Heart right ventricle (tissue), 16 donors: ENCODE measurements at regions of chr12 and their contacts with region 1.

Region 1: DNA sequence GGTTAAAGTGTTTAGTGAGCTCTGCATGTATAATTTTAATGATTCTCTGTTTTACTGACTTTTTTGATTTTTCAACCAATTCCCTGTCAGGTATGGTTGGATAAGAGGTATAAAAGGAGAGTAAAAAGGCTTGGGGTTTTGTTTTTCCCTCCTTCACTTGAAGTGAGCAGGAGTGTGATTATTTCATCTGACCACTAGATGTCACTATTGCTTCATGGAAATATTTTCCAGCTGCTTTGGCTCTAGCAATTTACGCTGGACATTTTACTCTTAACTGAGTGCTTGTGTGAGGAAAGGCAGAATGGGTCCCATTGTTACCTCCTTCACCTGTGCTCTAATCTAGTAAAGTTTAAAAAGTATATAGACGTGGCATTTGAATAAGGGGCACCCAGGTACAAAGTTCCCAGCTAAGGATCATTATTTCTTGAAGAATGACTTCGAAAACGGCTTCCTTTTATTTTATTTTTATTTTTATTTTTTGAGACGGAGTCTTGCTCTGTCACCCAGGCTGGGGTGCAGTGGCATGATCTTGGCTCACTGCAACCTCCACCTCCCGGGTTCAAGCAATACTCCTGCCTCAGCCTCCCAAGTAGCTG is 66.5 kb downstream of the TBC1D30 start:
- DNase-seq: no peak
- ATAC-seq: peak in 7 of 8 donors; percentile 41 to 69 (median 63)
- H3K4me3 ChIP-seq: no peak overlapping the region
- H3K27ac ChIP-seq: no peak overlapping the region
- H3K4me1 ChIP-seq: no peaks in the 10 kb centered on the region
- H3K27me3 ChIP-seq: peaks cover 0 to 21% (median 13%) of the 10 kb centered on the region in 7 donors
- CTCF ChIP-seq: peak; percentile 65 to 89 (median 83)

Region 2: DNA sequence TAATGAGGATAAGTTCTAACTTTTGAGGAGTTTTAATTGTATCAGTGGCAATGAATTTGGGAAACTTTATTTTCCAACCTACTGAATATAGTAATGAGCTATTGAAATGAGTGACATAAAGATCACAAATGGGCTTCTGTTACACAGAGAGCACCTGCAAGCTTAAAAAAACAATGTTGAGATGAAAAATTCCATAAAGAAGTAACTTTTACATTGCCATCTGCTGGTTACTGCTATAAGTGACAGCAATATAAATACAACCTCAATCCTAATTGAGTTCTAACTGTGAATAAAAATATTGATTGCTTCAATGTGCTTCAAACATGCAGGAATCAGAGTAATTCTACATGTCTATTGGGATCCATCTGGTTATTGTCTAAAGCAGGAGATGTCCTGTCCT is 216.0 kb after region 1 on chr12:
- intact Hi-C with region 1: loop called in 4 of 10 experiments (anchors 5 to 10 kb)
- DNase-seq: no peak
- ATAC-seq: no peak
- H3K4me3 ChIP-seq: no peak overlapping the region
- H3K27ac ChIP-seq: no peak overlapping the region
- H3K4me1 ChIP-seq: no peaks in the 10 kb centered on the region
- H3K27me3 ChIP-seq: peaks cover 0 to 13% (median 7%) of the 10 kb centered on the region in 7 donors
- CTCF ChIP-seq: peak in 5 of 9 donors; percentile 21 to 49 (median 33)

Region 3: DNA sequence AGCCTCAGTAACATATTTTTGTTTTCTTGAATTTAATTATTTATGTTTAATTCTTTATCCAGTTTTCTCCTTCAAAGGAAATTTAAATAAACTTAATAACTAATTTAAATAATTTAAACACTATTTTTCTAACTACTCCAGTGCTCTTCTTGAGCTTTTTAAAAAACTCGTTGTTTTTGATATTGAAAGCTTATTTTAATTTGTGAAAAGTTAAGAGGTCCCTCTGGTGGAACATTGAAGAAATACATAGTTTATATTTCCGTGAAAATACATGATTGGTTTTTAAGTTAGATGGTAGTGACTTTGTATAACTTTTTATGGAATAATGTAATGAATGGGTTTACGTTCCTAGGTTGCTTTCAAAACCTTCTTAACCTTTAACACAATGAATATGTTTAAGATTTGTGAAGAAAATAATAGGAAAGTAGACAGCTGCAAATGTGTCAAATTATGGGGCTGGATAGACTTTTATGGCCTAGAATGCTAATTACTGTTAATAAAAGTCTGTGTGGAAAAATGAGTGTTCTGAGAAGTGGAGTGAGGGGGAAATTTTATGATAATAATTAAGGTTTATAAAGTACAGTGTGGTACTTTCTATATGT is 341.6 kb after region 1 on chr12:
- intact Hi-C with region 1: loop called in 8 of 10 experiments (anchors 2 to 5 kb)
- DNase-seq: no peak
- ATAC-seq: no peak
- H3K4me3 ChIP-seq: no peak overlapping the region
- H3K27ac ChIP-seq: no peak overlapping the region
- H3K4me1 ChIP-seq: peaks cover 0 to 6% (median 0%) of the 10 kb centered on the region in 9 donors
- H3K27me3 ChIP-seq: no peaks in the 10 kb centered on the region
- CTCF ChIP-seq: peak; percentile 40 to 73 (median 57)

Region 4: DNA sequence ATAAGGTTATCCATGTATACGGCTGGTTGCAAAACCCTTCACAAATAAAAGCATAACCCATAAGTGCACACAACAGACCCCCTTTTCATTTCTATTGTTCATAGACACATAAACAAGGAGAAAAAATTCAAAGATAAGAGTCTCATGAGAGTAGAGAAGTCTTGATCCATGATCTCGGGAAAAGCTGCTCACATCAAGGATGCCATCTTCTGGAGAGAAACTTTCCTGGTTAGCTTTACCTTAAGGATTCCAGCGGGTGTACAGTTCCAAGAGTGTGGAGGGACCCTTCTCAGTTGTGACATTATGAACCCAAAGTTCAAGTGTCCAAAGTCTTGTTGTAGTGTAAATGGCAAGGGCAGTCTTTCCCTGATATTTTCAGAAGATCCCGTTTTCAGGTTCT is 1095.1 kb after region 1 on chr12:
- intact Hi-C with region 1: loop called in 2 of 10 experiments (anchors 5 to 10 kb)
- DNase-seq: no peak
- ATAC-seq: no peak
- H3K4me3 ChIP-seq: no peak overlapping the region
- H3K27ac ChIP-seq: no peak overlapping the region
- H3K4me1 ChIP-seq: no peaks in the 10 kb centered on the region
- H3K27me3 ChIP-seq: peaks cover 0 to 8% (median 0%) of the 10 kb centered on the region in 7 donors
- CTCF ChIP-seq: peak in 2 of 9 donors; percentile 7 to 25

Region 5: GRCh38 chr12:66107451-66107915 is 1216.5 kb after region 1 on chr12:
- intact Hi-C with region 1: loop called in 8 of 10 experiments (anchors 1 to 10 kb)
- DNase-seq: peak in 1 of 2 donors; percentile 76
- ATAC-seq: peak; percentile 53 to 86 (median 74)
- H3K4me3 ChIP-seq: no peak overlapping the region
- H3K27ac ChIP-seq: no peak overlapping the region
- H3K4me1 ChIP-seq: peaks cover 0 to 7% (median 0%) of the 10 kb centered on the region in 9 donors
- H3K27me3 ChIP-seq: no peaks in the 10 kb centered on the region
- CTCF ChIP-seq: peak; percentile 69 to 89 (median 79)